CD8-positive, alpha-beta memory T cell (primary cell): ENCODE measurements at regions of chr2 and their contacts with region 1.

Region 1: GRCh38 chr2:233061591-233062450 is 1.7 kb downstream of the INPP5D start:
- DNase-seq: peak in 2 of 5 donors; percentile 20 to 31
- H3K4me3 ChIP-seq: peak overlapping the region; percentile 100
- H3K4me3 Mint-ChIP-seq: peak overlapping the region; percentile 90 to 98 (median 95)
- H3K27ac ChIP-seq: peak overlapping the region; percentile 80
- H3K27ac Mint-ChIP-seq: peak overlapping the region; percentile 94 to 100 (median 98)
- H3K4me1 ChIP-seq: peaks cover 52% of the 10 kb centered on the region
- H3K4me1 Mint-ChIP-seq: peaks cover 51 to 64% (median 51%) of the 10 kb centered on the region in 3 donors
- H3K27me3 ChIP-seq: no peaks in the 10 kb centered on the region
- H3K27me3 Mint-ChIP-seq: no peaks in the 10 kb centered on the region

Region 2: DNA sequence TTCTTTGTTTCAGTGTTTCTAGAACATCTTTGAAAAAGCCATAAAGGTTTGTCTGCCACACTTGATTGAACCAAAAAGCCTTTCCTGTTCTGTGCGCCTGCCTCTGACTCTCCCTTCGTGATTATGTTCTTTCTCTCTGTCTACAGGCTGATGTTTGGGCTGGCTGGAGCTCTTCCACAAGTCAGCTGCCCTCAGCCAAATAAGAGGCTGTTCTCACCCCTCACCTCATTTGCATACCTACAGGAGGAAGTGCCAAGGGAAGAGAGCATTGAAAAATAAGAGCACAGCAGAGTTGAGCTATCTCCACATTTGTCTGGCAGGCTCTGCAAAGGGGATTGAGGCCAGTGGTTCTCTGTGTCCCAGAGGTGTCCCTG is 14.1 kb after region 1 on chr2:
- CTCF ChIA-PET with region 1: interaction called, 52 read pairs
- POLR2A ChIA-PET with region 1: interaction called, 43 read pairs
- DNase-seq: peak in 3 of 5 donors; percentile 49 to 68 (median 66)
- H3K4me3 ChIP-seq: peak overlapping the region; percentile 60
- H3K4me3 Mint-ChIP-seq: no peak overlapping the region
- H3K27ac ChIP-seq: peak overlapping the region; percentile 38
- H3K27ac Mint-ChIP-seq: no peak overlapping the region
- H3K4me1 ChIP-seq: peaks cover 84% of the 10 kb centered on the region
- H3K4me1 Mint-ChIP-seq: peaks cover 35 to 51% (median 45%) of the 10 kb centered on the region in 3 donors
- H3K27me3 ChIP-seq: no peaks in the 10 kb centered on the region
- H3K27me3 Mint-ChIP-seq: no peaks in the 10 kb centered on the region

Region 3: DNA sequence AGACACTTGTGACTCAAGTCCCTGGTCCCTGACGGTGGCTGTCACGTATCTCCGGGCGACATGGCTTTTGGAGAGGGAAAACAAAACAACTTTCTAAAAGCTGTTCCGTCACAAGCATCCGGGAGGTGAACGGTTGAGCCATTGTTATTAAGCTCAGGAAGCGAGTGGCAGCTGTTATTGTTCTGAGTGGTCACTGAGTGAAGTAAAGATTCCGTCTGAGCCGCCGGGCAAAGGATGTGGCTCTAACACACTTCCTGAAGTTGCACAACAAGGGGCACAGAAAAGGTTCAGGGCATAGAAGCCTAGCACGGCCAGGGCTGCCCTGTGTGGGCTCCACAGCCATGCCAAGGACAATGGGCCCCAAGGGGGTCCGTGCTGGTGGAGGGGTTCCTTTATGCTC is 22.7 kb after region 1 on chr2:
- CTCF ChIA-PET with region 1: interaction called, 52 read pairs
- POLR2A ChIA-PET with region 1: interaction called, 43 read pairs
- DNase-seq: peak in 4 of 5 donors; percentile 30 to 71 (median 56)
- H3K4me3 ChIP-seq: peak overlapping the region; percentile 35
- H3K4me3 Mint-ChIP-seq: peak overlapping the region; percentile 80 to 91 (median 87)
- H3K27ac ChIP-seq: peak overlapping the region; percentile 66
- H3K27ac Mint-ChIP-seq: peak overlapping the region; percentile 95 to 99 (median 98)
- H3K4me1 ChIP-seq: peaks cover 77% of the 10 kb centered on the region
- H3K4me1 Mint-ChIP-seq: peaks cover 89 to 98% (median 97%) of the 10 kb centered on the region in 3 donors
- H3K27me3 ChIP-seq: no peaks in the 10 kb centered on the region
- H3K27me3 Mint-ChIP-seq: no peaks in the 10 kb centered on the region

Region 4: DNA sequence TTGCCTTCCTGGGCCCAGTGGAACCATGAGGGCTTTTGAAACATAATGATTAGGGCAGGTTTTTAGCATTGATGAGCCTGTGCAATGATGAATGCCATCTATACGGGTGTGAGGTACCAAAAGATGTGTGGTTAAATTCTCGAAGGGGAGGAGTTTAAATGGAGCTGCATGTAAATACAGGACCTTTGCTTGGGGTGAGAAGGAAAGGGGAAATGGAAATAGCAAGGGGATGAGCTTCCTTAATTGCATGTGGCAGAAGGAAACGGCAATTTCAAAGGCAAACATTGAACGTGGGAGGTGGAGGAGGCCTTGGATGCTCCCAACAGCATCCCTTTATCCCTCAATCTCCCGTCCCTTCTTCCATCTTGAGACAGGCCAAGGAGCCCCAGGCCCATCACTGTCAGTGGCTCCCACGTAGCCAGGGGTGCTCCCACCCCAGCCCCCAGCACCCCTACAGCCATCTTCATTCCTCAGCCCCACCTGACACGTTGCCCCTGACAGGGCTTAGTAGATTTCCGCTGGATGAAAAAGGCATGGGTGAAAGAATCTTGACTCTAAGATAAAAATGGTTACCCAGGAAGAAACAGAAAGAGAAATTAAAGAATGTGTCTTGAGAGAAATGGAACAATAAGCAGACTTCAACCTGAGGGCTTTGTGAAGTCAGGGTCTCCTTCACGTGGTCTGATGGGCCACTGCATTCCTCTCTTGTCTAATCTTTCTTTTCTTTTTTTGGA is 30.8 kb after region 1 on chr2:
- CTCF ChIA-PET with region 1: interaction called, 10 read pairs
- POLR2A ChIA-PET with region 1: no interaction called
- DNase-seq: no peak
- H3K4me3 ChIP-seq: no peak overlapping the region
- H3K4me3 Mint-ChIP-seq: peak overlapping the region in 3 of 7 donors; percentile 23 to 32 (median 25)
- H3K27ac ChIP-seq: no peak overlapping the region
- H3K27ac Mint-ChIP-seq: peak overlapping the region; percentile 24 to 91 (median 70)
- H3K4me1 ChIP-seq: peaks cover 38% of the 10 kb centered on the region
- H3K4me1 Mint-ChIP-seq: peaks cover 61 to 87% (median 87%) of the 10 kb centered on the region in 3 donors
- H3K27me3 ChIP-seq: no peaks in the 10 kb centered on the region
- H3K27me3 Mint-ChIP-seq: no peaks in the 10 kb centered on the region

Region 5: GRCh38 chr2:233100192-233100998 is 38.6 kb after region 1 on chr2:
- CTCF ChIA-PET with region 1: interaction called, 34 read pairs
- POLR2A ChIA-PET with region 1: interaction called, 12 read pairs
- DNase-seq: peak; percentile 55 to 87 (median 70)
- H3K4me3 ChIP-seq: peak overlapping the region; percentile 42
- H3K4me3 Mint-ChIP-seq: peak overlapping the region; percentile 59 to 91 (median 84)
- H3K27ac ChIP-seq: peak overlapping the region; percentile 49
- H3K27ac Mint-ChIP-seq: peak overlapping the region; percentile 84 to 98 (median 95)
- H3K4me1 ChIP-seq: peaks cover 49% of the 10 kb centered on the region
- H3K4me1 Mint-ChIP-seq: peaks cover 77 to 88% (median 87%) of the 10 kb centered on the region in 3 donors
- H3K27me3 ChIP-seq: no peaks in the 10 kb centered on the region
- H3K27me3 Mint-ChIP-seq: peaks cover 0 to 1% of the 10 kb centered on the region in 2 donors

Region 6: GRCh38 chr2:233267516-233268245 is 205.9 kb after region 1 on chr2:
- CTCF ChIA-PET with region 1: no interaction called
- POLR2A ChIA-PET with region 1: interaction called, 11 read pairs
- DNase-seq: peak; percentile 72 to 93 (median 92)
- H3K4me3 ChIP-seq: peak overlapping the region; percentile 42
- H3K4me3 Mint-ChIP-seq: peak overlapping the region; percentile 54 to 86 (median 78)
- H3K27ac ChIP-seq: peak overlapping the region; percentile 75
- H3K27ac Mint-ChIP-seq: peak overlapping the region; percentile 96 to 100 (median 98)
- H3K4me1 ChIP-seq: peaks cover 69% of the 10 kb centered on the region
- H3K4me1 Mint-ChIP-seq: peaks cover 71 to 80% (median 77%) of the 10 kb centered on the region in 3 donors
- H3K27me3 ChIP-seq: no peaks in the 10 kb centered on the region
- H3K27me3 Mint-ChIP-seq: no peaks in the 10 kb centered on the region